HepG2 (cell line): ENCODE measurements at regions of chr11 and their contacts with region 1.

Region 1: GRCh38 chr11:68806921-68807844 is 34.5 kb downstream of the CPT1A start:
- DNase-seq: no peak
- ATAC-seq: no peak
- H3K4me3 ChIP-seq: no peak overlapping the region
- H3K27ac ChIP-seq: no peak overlapping the region
- H3K4me1 ChIP-seq: no peaks in the 10 kb centered on the region
- H3K27me3 ChIP-seq: no peaks in the 10 kb centered on the region
- CTCF ChIP-seq: no peak
- EP300 ChIP-seq: no peak
- POLR2A ChIP-seq: no peak
- RAD21 ChIP-seq: no peak

Region 2: DNA sequence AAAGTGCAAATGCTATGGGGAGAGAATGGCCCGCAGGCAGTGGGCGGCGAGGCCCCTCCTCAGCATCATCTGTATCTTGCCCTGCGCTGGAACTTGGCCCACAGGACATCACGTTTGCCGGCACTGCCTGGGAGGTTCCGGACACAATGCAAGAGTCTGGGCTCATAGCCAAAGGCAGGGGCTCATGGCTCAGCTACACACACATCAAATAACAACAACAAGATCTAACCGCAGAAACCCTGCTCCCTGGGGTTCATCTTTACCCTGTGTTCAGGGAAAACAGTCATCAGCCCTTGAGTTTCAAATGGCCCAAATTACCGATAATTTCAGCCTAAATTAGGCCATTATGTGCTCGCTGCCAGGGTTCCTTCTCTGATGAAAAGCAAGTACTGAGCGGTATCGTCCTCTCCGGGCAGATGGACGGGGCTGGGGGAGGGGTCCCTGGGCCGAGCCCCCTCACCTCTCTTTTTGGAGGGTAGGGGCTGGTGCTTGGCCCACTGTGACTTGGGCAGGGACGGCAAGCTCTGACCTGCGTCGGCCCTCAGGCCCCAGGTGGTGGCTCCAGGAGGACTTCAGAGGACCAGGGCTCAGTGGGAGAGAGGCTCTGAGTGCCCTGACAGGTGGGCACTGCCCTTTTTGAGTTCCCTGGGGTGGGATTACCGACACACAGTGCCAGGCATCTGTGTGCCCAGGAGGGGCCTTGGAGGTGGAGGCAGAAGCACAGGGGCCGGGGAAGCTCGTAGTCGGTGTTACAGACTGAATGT is 147.8 kb before region 1 on chr11:
- CTCF ChIA-PET with region 1: no interaction called
- POLR2A ChIA-PET with region 1: no interaction called
- in situ Hi-C with region 1: no loop called
- intact Hi-C with region 1: loop called (anchors 10 kb)
- DNase-seq: peak; percentile 55
- ATAC-seq: peak; percentile 80
- H3K4me3 ChIP-seq: no peak overlapping the region
- H3K27ac ChIP-seq: no peak overlapping the region
- H3K4me1 ChIP-seq: peaks cover 5% of the 10 kb centered on the region
- H3K27me3 ChIP-seq: peaks cover 10 to 74% of the 10 kb centered on the region in 2 experiments
- CTCF ChIP-seq: no peak
- EP300 ChIP-seq: no peak
- POLR2A ChIP-seq: no peak
- RAD21 ChIP-seq: no peak